Right ventricle myocardium inferior (tissue), 1 donor: ENCODE measurements at regions of chr17 and their contacts with region 1.

Region 1: DNA sequence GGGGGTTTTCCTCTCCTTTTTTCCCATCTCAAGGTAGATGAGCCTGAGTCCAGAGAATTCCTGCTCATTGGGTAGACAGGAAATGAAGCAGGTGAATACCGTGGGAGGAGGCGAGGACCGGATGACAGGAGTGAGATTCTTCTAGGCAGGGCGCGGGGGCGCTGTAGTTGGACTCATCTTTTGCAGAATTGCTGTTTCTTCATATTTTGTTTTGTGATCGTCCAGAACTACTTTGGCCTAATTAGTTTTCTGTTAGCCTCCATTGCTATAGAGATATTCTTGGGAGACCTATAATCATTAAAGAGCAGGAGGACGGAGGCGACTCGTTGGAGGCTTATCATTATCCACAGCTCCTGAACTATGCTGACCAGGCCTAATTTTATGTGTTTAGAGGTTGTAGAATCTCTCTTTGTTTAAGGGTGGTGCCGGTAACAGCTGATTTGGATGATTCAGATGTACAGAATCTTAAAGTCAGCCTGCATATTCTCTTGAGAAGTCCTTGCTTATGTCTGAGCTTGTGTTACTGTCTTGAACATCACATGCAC is 650 bp downstream of the ATP6V0A1 start:
- DNase-seq: peak; percentile 77
- ATAC-seq: peak; percentile 40

Region 2: DNA sequence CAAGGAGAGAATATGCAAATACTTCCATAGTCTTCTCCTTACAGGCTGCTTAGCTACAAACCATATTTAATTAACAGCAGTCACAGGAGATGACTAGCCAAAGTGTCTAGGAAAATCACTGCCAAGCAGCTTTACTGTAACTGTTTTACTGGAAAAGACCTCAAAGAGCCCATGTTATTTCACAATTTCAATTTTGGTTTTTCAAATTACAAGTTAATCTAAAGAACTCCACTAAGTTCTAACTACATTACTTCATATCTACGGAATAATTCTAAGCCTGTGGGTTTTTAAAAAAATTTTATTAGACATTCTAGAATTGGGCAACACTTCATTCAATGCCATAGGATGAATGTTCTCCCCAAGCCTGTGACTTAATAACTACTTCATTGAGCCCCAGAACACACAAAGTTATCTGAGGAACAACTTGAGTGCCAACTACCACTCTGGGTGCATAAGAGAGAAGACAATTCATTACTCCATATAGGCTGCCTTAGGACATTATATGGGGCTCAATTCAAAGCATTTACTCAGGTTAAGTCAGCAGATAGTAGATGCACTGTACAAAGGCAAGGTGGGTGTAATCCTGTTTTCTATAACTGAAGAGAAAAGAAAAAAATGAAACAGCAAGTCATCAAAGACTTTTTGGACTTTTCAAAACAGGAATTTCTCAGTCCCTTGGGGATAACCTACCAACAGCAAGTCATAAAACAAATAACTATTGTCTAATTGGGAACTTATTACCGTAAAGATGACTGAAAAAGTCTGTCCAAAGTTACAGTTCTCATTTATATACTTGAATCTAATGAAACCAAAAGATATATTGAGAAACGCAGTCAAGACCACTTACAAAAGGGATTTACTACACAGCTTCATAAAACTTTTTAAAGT is 104.1 kb before region 1 on chr17:
- intact Hi-C with region 1: no loop called
- DNase-seq: no peak
- ATAC-seq: no peak

Region 3: GRCh38 chr17:42399121-42399520 is 60.2 kb before region 1 on chr17:
- intact Hi-C with region 1: no loop called
- DNase-seq: no peak
- ATAC-seq: no peak

Region 4: DNA sequence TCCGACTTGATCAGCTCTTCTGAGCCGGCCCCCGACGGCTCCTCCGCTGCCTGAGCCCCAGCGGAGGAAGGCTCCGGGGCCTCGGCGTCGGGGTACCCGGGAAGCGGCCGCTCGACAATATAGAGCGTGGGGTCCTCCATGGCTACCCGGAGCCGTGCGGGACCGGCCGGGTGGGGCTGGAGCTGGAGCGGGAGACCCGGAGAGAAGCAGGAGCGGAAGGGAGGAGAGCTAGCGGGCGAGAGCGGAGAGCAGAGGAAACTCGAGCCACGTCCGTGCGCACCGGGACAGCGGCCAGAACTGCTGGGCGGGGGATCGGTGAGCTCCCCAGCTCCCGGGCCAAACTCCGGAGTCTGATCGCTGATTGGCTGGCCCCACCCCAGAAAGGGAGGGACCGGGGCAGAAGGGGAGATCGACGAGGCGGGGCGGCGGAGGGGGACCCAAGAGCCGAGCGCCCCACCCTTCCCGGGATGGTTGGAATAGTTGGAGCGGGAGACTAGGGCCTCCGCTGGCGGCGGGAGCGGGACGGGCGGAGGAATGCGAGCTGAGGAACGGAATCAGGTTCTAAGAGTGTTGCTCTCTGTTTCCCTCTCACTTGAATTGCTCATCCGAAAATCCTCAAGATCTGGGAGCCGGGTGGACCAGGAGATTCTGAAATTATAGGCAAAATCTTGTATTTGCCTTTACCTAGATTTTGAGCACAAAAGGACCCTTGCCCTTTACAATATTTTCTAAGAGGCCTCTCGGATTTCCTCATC is 36.2 kb before region 1 on chr17 and contains the start of gene CAVIN1:
- intact Hi-C with region 1: loop called (anchors 5 kb)
- DNase-seq: peak; percentile 99
- ATAC-seq: peak; percentile 92
- total RNA-seq, gene CAVIN1: 240 TPM

Region 5: DNA sequence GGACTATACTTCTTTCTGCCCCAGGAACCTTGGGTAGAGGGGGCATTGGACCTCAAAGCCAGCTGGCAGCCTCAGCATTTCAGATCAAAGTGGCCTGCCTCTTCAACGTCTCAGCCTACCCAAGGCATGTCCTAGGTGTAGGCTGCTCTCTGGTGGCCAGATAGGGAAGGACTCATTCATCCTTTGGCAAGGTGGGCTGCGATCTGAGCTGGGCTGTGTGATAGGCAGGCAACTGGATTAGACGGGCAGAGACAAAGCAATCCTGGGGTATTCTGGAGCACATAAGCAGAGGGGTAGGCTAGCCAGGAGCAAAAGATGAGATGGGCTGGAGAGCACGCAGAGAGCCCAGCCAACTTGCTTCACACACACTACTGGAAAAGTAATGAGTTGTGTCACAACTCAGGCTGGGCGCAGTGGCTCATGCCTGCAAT is 68.0 kb after region 1 on chr17:
- intact Hi-C with region 1: no loop called
- DNase-seq: no peak
- ATAC-seq: peak; percentile 82